ENCODE measurements at regions of chr22 and their contacts with region 1.

Region 1: DNA sequence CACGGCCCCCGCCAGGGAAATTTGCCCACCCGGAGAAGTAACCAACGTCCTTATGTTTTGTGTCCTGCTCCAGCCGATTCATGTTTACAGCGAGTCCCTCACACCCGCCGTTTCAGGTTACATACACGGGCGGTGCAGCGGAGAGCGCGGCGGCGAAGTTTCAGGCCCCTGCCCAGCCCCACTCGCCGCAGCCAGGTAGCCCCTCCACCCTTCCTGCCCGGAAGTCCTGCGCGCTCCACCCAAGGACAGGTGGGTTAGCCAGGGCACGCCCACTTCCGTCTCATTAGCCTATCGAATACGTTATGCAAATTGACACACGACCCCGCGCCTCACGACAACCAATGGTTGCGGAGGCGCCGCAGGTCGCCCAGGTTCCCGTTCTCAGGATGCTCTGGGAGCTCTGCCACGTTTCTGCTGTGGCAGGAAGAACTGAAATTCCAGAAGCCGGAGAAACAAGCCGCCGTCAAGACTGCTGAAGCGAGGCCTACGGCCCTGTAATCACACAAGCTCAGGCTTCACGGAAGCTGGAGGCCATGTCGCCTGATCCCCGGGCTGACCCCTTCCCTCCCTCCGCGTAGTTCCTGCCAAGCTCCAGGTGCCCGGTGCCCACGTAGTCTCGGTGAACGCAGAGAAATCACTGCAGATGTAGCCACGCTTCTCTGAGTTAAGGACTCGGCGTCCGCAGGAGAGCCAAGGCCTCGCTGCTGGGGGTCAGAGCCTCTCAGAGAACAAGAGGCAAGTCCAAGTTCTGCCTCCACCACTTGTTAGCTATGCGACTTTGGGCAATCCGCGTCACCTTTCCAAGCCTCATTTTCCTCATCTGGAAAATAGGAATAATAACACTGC is 22.4 kb upstream of the MYH9 start:
- DNase-seq: peak in 2 of 3 donors; percentile 50 to 64
- H3K4me3 ChIP-seq: peak overlapping the region; percentile 7 to 73 (median 32)
- H3K4me3 Mint-ChIP-seq: peak overlapping the region; percentile 80 to 92
- H3K27ac ChIP-seq: peak overlapping the region in 1 of 2 donors; percentile 46
- H3K27ac Mint-ChIP-seq: peak overlapping the region in 6 of 7 donors; percentile 35 to 80 (median 56)
- H3K4me1 ChIP-seq: peaks cover 48 to 49% of the 10 kb centered on the region in 2 donors
- H3K4me1 Mint-ChIP-seq: peaks cover 53% of the 10 kb centered on the region
- H3K27me3 ChIP-seq: no peaks in the 10 kb centered on the region
- H3K27me3 Mint-ChIP-seq: peaks cover 0 to 3% (median 2%) of the 10 kb centered on the region in 3 donors
- CTCF ChIP-seq: no peak

Region 2: DNA sequence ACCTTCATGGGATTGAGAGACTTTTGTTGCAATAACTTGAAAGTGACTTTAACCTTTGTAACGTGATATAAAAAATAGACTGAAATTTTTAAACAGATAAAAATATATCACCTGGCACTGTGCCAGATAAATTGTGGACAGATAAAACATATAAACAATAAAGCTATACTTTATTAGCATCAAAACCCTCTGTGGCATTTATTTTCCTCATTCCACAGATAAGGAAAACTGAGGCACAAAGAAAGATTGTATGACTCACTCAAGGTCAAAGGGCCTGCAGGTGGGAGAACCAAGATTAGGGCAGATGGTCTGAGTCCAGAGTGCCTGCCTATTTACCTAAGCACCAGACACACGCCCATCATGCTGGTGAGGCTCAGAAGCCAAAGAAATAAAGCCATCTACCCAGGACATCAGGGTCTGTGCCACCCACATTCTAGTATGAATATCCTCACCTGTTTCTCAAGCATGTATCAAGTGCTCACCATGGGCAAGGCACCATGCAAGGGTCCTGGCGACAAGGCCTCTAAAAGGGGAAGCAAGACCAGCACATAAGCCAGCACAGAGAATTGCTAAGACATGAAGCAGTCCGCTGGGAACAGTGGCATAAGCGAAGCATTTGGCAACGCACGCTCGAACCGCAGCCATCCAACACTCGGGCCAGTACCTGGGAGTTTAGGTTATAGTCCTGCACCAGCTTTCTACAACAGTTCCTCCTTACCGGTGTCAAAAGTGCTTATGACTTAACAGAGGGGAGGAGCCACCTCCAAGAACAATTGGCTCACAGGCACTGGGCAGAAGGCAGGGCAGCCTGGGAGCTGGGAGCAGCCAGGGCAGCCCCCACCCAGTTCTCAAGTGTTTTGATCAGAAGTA is 40.0 kb before region 1 on chr22:
- intact Hi-C with region 1: loop called in 1 of 2 experiments (anchors 5 kb)
- DNase-seq: peak; percentile 66 to 76 (median 73)
- H3K4me3 ChIP-seq: peak overlapping the region in 1 of 3 experiments; percentile 45
- H3K4me3 Mint-ChIP-seq: peak overlapping the region; percentile 42 to 64
- H3K27ac ChIP-seq: peak overlapping the region; percentile 88 to 95
- H3K27ac Mint-ChIP-seq: peak overlapping the region; percentile 92 to 97 (median 97)
- H3K4me1 ChIP-seq: peaks cover 97 to 100% of the 10 kb centered on the region in 2 donors
- H3K4me1 Mint-ChIP-seq: peaks cover 96% of the 10 kb centered on the region
- H3K27me3 ChIP-seq: no peaks in the 10 kb centered on the region
- H3K27me3 Mint-ChIP-seq: peaks cover 0 to 2% (median 0%) of the 10 kb centered on the region in 3 donors
- CTCF ChIP-seq: no peak

Region 3: GRCh38 chr22:36454916-36455570 is 44.9 kb after region 1 on chr22:
- intact Hi-C with region 1: no loop called
- DNase-seq: peak; percentile 63 to 84 (median 77)
- H3K4me3 ChIP-seq: peak overlapping the region; percentile 28 to 85 (median 48)
- H3K4me3 Mint-ChIP-seq: peak overlapping the region; percentile 70 to 71
- H3K27ac ChIP-seq: peak overlapping the region; percentile 37 to 67
- H3K27ac Mint-ChIP-seq: peak overlapping the region; percentile 18 to 90 (median 76)
- H3K4me1 ChIP-seq: peaks cover 67 to 75% of the 10 kb centered on the region in 2 donors
- H3K4me1 Mint-ChIP-seq: peaks cover 58% of the 10 kb centered on the region
- H3K27me3 ChIP-seq: no peaks in the 10 kb centered on the region
- H3K27me3 Mint-ChIP-seq: peaks cover 0 to 2% (median under 1%) of the 10 kb centered on the region in 3 donors
- CTCF ChIP-seq: no peak